ENCODE measurements at regions of chr1 and their contacts with region 1.

Region 1: GRCh38 chr1:215606564-215607168 is 39.6 kb downstream of the KCTD3 start:
- DNase-seq: peak in 2 of 4 experiments; percentile 20 to 23
- ATAC-seq: peak; percentile 78
- H3K4me3 ChIP-seq: no peak overlapping the region
- H3K27ac ChIP-seq: no peak overlapping the region
- H3K4me1 ChIP-seq: no peaks in the 10 kb centered on the region
- H3K27me3 ChIP-seq: no peaks in the 10 kb centered on the region
- CTCF ChIP-seq: peak in 1 of 3 experiments; percentile 57; a peak in 2 of 6 replicates
- EP300 ChIP-seq: no peak
- POLR2A ChIP-seq: no peak
- RAD21 ChIP-seq: peak; percentile 31 to 65; a peak in 3 of 4 replicates

Region 2: GRCh38 chr1:215215846-215216245 is 390.8 kb before region 1 on chr1:
- CTCF ChIA-PET with region 1: no interaction called
- POLR2A ChIA-PET with region 1: no interaction called
- in situ Hi-C with region 1: no loop called
- intact Hi-C with region 1: loop called (anchors 10 kb)
- DNase-seq: no peak
- ATAC-seq: no peak
- H3K4me3 ChIP-seq: no peak overlapping the region
- H3K27ac ChIP-seq: no peak overlapping the region
- H3K4me1 ChIP-seq: no peaks in the 10 kb centered on the region
- H3K27me3 ChIP-seq: no peaks in the 10 kb centered on the region
- CTCF ChIP-seq: no peak
- EP300 ChIP-seq: no peak
- POLR2A ChIP-seq: no peak
- RAD21 ChIP-seq: no peak

Region 3: DNA sequence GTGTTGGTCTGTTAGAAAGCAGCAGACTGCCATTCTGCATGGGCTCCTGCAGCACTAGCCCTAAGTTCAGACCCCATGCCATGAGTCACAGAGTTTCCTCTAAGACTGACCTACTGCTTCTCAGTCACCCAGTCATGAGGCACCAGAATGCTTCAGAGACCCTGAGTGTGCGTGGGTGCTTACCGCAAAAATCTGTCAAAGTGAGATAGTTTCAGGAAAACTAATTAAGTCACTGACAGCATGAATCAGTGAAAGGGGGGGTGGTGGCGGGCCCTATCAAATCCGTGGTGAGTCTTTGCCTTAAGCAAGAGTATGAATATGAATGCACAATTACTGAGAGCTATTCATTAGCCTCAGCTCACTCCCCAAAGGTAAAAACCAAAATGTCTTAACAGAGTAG is 58.5 kb after region 1 on chr1:
- CTCF ChIA-PET with region 1: no interaction called
- POLR2A ChIA-PET with region 1: no interaction called
- in situ Hi-C with region 1: no loop called
- intact Hi-C with region 1: loop called (anchors 10 kb)
- DNase-seq: peak in 1 of 4 experiments; percentile 46
- ATAC-seq: peak; percentile 36; the same call in 1 of the 3 replicates
- H3K4me3 ChIP-seq: no peak overlapping the region
- H3K27ac ChIP-seq: no peak overlapping the region
- H3K4me1 ChIP-seq: no peaks in the 10 kb centered on the region
- H3K27me3 ChIP-seq: no peaks in the 10 kb centered on the region
- CTCF ChIP-seq: no peak
- EP300 ChIP-seq: no peak
- POLR2A ChIP-seq: no peak
- RAD21 ChIP-seq: no peak